PC-9 (cell line): ENCODE measurements at regions of chr7 and their contacts with region 1.

Region 1: GRCh38 chr7:13850185-13850752 is 139.2 kb downstream of the ETV1 start:
- DNase-seq: peak; percentile 51 to 91
- H3K4me3 ChIP-seq: no peak overlapping the region
- H3K27ac ChIP-seq: peak overlapping the region; percentile 33
- H3K4me1 ChIP-seq: peaks cover 11% of the 10 kb centered on the region
- H3K27me3 ChIP-seq: no peaks in the 10 kb centered on the region
- CTCF ChIP-seq: no peak

Region 2: GRCh38 chr7:13725591-13725990 is 124.7 kb before region 1 on chr7:
- CTCF ChIA-PET with region 1: no interaction called
- POLR2A ChIA-PET with region 1: no interaction called
- intact Hi-C with region 1: no loop called
- DNase-seq: no peak
- H3K4me3 ChIP-seq: no peak overlapping the region
- H3K27ac ChIP-seq: no peak overlapping the region
- H3K4me1 ChIP-seq: no peaks in the 10 kb centered on the region
- H3K27me3 ChIP-seq: no peaks in the 10 kb centered on the region
- CTCF ChIP-seq: peak; percentile 46

Region 3: DNA sequence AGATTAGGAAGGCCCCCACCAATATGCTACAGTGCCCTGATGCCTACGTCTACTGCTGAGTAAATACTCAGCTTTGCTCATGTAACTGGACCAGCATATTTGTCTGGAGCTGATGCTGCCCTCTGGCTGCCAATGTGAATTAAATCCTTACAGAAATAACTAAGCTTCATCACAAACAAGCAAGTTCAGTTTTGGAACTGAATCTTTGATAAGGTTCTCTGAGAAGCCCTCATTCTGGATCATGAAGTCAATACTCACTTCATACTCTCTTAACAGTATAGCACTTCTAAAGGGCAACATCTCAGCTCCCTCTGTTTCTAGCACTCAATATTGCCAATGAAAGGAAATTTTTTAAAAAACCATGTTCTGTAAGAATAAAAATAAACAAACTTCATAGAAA is 107.5 kb before region 1 on chr7:
- CTCF ChIA-PET with region 1: no interaction called
- POLR2A ChIA-PET with region 1: interaction called, 3 read pairs
- intact Hi-C with region 1: loop called (anchors 5 kb)
- DNase-seq: peak in 1 of 2 experiments; percentile 23
- H3K4me3 ChIP-seq: no peak overlapping the region
- H3K27ac ChIP-seq: no peak overlapping the region
- H3K4me1 ChIP-seq: no peaks in the 10 kb centered on the region
- H3K27me3 ChIP-seq: no peaks in the 10 kb centered on the region
- CTCF ChIP-seq: peak; percentile 64; the same call in 1 of the 2 replicates

Region 4: GRCh38 chr7:13874783-13875182 is 24.5 kb after region 1 on chr7:
- CTCF ChIA-PET with region 1: no interaction called
- POLR2A ChIA-PET with region 1: no interaction called
- intact Hi-C with region 1: no loop called
- DNase-seq: no peak
- H3K4me3 ChIP-seq: no peak overlapping the region
- H3K27ac ChIP-seq: no peak overlapping the region
- H3K4me1 ChIP-seq: no peaks in the 10 kb centered on the region
- H3K27me3 ChIP-seq: no peaks in the 10 kb centered on the region
- CTCF ChIP-seq: no peak